Activated naive CD4-positive, alpha-beta T cell treated with anti-CD3 and anti-CD28 coated beads for 36 hours (primary cell): ENCODE measurements at regions of chr6 and their contacts with region 1.

Region 1: DNA sequence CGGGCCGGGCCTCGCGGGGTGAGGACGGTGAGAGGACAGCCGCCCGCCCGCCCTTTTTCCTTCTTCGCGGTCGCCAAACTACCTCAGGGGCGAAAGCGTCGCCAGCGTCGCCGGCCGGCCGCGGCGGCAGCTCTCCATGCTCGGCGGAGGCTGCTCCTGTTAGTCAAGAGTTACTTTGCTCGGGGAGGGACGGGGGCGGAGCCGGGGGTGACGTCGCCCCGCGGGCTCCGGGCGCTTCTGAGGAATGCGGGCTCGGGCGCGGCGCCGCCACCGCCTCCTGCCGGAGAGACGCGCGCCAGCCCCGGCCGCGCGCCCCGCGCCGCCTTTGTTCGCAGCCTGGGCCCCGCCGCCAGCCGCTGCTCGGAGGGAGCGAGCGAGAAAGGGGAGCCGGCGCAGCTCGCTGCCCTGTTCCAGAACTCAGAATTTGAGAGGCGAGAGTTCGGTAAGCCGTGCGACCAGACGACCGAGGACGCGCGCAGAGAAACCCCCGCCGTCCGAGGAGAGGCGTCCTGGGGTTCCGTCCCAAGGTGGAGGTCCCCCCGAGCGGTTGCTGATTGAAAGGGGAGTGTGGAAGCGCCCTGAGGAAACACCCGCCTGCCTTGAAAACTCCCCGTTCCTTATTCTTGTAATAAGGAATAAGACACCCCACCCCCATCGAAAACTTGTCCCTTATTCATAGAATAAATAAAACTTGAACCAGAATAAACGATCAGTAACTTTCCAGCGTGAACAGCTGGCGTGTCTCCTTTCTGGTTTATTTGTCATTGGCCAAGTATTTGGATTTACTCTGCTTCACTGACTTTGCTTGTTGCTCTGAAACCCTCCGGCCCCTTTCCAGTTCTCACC is at the start of gene PTPRK:
- DNase-seq: peak; percentile 92
- H3K4me3 Mint-ChIP-seq: peak within 1 kb of the TSS; percentile 91
- H3K27ac Mint-ChIP-seq: peak within 1 kb of the TSS; percentile 63
- H3K4me1 Mint-ChIP-seq: peaks cover 8% of the 10 kb centered on the region
- H3K27me3 Mint-ChIP-seq: peaks cover 34% of the 10 kb centered on the region
- total RNA-seq, gene PTPRK: 5.5 to 8.0 TPM

Region 2: GRCh38 chr6:127266178-127266891 is 1254.3 kb before region 1 on chr6 and contains the start of gene RNF146:
- CTCF ChIA-PET with region 1: no interaction called
- intact Hi-C with region 1: loop called (anchors 2 kb)
- DNase-seq: peak; percentile 74
- H3K4me3 Mint-ChIP-seq: peak within 1 kb of the TSS; percentile 100
- H3K27ac Mint-ChIP-seq: peak within 1 kb of the TSS; percentile 100
- H3K4me1 Mint-ChIP-seq: peaks cover 25% of the 10 kb centered on the region
- H3K27me3 Mint-ChIP-seq: no peaks in the 10 kb centered on the region
- total RNA-seq, gene RNF146: 9.7 to 10.8 TPM

Region 3: DNA sequence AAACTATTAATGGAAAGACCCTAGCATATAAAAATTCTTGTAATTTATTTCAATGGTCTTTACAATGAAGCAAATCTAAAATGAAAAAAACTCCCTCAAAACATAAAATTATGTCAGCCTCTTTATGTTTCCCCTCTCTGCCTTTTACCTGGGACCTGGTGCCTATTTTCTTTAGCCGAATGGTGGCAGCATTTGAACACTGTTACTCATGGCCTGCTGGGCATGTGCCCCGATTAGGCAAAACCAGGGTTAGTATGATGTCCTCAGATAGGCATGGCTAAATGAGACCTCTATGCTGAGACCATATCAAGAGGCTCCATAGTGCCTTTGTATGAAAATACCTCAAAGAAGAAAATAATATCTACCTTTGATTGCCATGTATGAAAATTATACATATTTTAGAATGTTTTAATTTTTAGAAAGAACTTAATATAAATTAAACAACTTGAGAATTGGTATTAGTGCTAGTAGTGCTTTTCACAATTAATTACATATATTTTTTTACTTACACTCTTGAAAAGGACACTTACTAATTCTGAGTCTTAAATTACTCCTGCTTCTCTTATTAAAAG is 966.1 kb before region 1 on chr6:
- CTCF ChIA-PET with region 1: no interaction called
- intact Hi-C with region 1: loop called (anchors 10 kb)
- DNase-seq: peak; percentile 57
- H3K4me3 Mint-ChIP-seq: no peak overlapping the region
- H3K27ac Mint-ChIP-seq: no peak overlapping the region
- H3K4me1 Mint-ChIP-seq: no peaks in the 10 kb centered on the region
- H3K27me3 Mint-ChIP-seq: peaks cover 14% of the 10 kb centered on the region

Region 4: GRCh38 chr6:128259730-128260685 is 260.7 kb before region 1 on chr6:
- CTCF ChIA-PET with region 1: no interaction called
- intact Hi-C with region 1: loop called (anchors 5 kb)
- DNase-seq: no peak
- H3K4me3 Mint-ChIP-seq: peak overlapping the region; percentile 60
- H3K27ac Mint-ChIP-seq: peak overlapping the region; percentile 46
- H3K4me1 Mint-ChIP-seq: peaks cover 22% of the 10 kb centered on the region
- H3K27me3 Mint-ChIP-seq: no peaks in the 10 kb centered on the region

Region 5: DNA sequence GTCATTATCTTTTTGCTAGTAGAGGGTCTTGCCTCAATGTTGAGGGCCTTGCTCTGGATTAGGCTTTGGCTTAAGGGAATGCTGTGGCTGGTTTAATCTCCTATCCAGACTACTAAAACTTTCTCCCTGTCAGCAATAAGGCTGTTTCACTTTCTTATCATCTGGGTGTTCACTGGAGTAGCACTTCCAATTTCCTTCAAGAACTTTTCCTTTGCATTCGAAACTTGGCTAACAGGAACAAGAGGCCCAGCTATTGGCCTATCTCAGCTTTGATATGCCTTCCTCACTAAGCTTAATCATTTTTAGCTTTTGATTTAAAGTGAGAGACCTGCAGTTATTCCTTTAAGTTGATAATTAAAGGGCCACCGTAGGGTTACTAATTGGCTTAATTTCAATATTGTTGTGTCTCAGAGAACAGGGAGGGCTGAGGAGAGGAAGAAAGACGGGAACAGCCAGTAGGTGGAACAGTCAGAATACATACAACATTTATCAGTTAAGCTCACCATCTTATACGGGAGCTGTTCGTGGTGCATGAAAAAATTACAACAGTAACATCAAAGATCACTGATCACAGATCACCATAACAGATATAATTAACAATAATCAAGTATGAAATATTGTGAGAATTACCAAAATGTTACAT is 187.0 kb before region 1 on chr6:
- CTCF ChIA-PET with region 1: no interaction called
- intact Hi-C with region 1: loop called (anchors 5 kb)
- DNase-seq: no peak
- H3K4me3 Mint-ChIP-seq: no peak overlapping the region
- H3K27ac Mint-ChIP-seq: no peak overlapping the region
- H3K4me1 Mint-ChIP-seq: no peaks in the 10 kb centered on the region
- H3K27me3 Mint-ChIP-seq: no peaks in the 10 kb centered on the region

Region 6: GRCh38 chr6:128725271-128726233 is 204.9 kb after region 1 on chr6:
- CTCF ChIA-PET with region 1: no interaction called
- intact Hi-C with region 1: loop called (anchors 5 kb)
- DNase-seq: peak; percentile 31
- H3K4me3 Mint-ChIP-seq: no peak overlapping the region
- H3K27ac Mint-ChIP-seq: no peak overlapping the region
- H3K4me1 Mint-ChIP-seq: no peaks in the 10 kb centered on the region
- H3K27me3 Mint-ChIP-seq: peaks cover 24% of the 10 kb centered on the region

Region 7: GRCh38 chr6:129490521-129491245 is 970.0 kb after region 1 on chr6:
- CTCF ChIA-PET with region 1: no interaction called
- intact Hi-C with region 1: loop called (anchors 1 kb)
- DNase-seq: peak; percentile 79
- H3K4me3 Mint-ChIP-seq: peak overlapping the region; percentile 67
- H3K27ac Mint-ChIP-seq: peak overlapping the region; percentile 100
- H3K4me1 Mint-ChIP-seq: peaks cover 70% of the 10 kb centered on the region
- H3K27me3 Mint-ChIP-seq: no peaks in the 10 kb centered on the region

Region 8: DNA sequence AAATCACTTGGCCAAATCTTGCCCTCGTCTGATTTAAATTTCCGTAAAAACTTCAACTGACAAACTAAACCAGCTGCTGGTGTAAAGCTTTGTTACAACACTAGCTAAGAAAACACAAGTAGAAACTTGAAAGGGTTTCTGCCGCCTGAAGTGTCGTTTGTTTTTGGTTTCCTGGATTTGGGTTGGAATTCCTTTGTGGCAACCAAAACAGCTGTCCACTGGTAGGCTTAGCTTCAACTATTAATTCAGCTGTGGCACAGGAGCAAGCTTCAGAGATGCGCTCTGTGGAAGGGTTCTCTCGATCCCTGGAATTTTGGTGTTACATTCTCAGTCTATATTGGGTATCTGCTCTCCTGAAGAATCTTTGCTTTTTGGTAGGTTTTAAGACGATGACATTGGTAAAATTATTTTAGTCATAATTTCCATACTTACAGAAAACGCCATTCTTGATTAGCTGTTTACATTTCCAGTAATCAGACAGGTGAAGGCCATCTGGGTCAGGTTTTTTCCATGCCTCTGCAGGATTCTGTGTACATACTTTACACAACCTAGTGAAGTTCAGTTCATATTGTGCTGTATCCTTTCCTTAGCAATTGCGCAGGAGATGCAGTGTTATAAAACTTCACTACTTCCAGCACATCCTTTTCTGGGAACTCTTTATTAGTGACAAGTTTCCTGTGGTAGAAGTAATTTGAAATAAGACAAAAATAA is 1732.0 kb after region 1 on chr6:
- CTCF ChIA-PET with region 1: no interaction called
- intact Hi-C with region 1: no loop called
- DNase-seq: no peak
- H3K4me3 Mint-ChIP-seq: no peak overlapping the region
- H3K27ac Mint-ChIP-seq: no peak overlapping the region
- H3K4me1 Mint-ChIP-seq: no peaks in the 10 kb centered on the region
- H3K27me3 Mint-ChIP-seq: no peaks in the 10 kb centered on the region